Activated naive CD4-positive, alpha-beta T cell treated with anti-CD3 and anti-CD28 coated beads for 36 hours (primary cell): ENCODE measurements at regions of chr14 and their contacts with region 1.

Region 1: DNA sequence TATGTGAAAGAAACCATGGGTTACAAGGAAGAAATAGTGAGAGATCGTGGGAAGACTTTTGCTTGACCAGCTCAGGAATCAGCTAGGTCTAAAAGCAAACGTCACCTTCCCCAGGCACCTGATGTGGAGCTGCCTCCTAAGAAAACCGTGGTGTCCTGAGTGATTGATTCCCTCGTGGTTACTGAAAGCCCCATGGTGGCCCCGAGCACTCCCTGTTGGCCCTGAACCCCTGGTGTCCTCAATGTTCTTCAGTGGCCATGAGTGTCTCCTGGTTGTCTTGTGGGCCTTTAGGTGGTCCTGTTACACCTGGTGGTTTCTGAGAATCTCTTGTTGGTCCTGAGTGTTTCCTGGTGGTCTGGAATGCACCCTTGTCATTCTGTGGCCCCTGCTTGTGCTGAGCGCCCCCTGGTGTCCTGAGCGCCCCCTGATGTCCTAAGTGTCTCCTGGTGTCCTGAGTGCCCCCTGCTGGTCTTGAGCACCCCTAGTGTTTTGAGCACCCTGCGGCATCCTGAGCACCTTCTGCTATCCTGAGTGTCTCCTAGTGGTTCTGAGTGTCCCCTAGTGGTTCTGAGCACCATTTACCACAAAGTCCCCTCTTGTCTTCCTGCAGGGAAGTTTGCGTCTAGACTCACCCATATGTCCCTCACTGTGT is 518.7 kb downstream of the TMEM121 start:
- DNase-seq: peak; percentile 96
- H3K4me3 Mint-ChIP-seq: no peak overlapping the region
- H3K27ac Mint-ChIP-seq: peak overlapping the region; percentile 81
- H3K4me1 Mint-ChIP-seq: peaks cover 14% of the 10 kb centered on the region
- H3K27me3 Mint-ChIP-seq: peaks cover 5% of the 10 kb centered on the region

Region 2: GRCh38 chr14:105974902-105975301 is 70.2 kb before region 1 on chr14:
- CTCF ChIA-PET with region 1: interaction called, 12 read pairs
- intact Hi-C with region 1: loop called (anchors 2 kb)
- DNase-seq: peak; percentile 64
- H3K4me3 Mint-ChIP-seq: no peak overlapping the region
- H3K27ac Mint-ChIP-seq: no peak overlapping the region
- H3K4me1 Mint-ChIP-seq: peaks cover under 1% of the 10 kb centered on the region
- H3K27me3 Mint-ChIP-seq: no peaks in the 10 kb centered on the region

Region 3: GRCh38 chr14:106094654-106095189 is 49.6 kb after region 1 on chr14:
- CTCF ChIA-PET with region 1: interaction called, 4 read pairs
- intact Hi-C with region 1: loop called (anchors 2 kb)
- DNase-seq: peak; percentile 89
- H3K4me3 Mint-ChIP-seq: no peak overlapping the region
- H3K27ac Mint-ChIP-seq: no peak overlapping the region
- H3K4me1 Mint-ChIP-seq: peaks cover 3% of the 10 kb centered on the region
- H3K27me3 Mint-ChIP-seq: no peaks in the 10 kb centered on the region

Region 4: GRCh38 chr14:106129274-106129673 is 84.2 kb after region 1 on chr14:
- CTCF ChIA-PET with region 1: no interaction called
- intact Hi-C with region 1: no loop called
- DNase-seq: peak; percentile 68
- H3K4me3 Mint-ChIP-seq: no peak overlapping the region
- H3K27ac Mint-ChIP-seq: no peak overlapping the region
- H3K4me1 Mint-ChIP-seq: peaks cover 32% of the 10 kb centered on the region
- H3K27me3 Mint-ChIP-seq: no peaks in the 10 kb centered on the region